Endothelial cell of umbilical vein (primary cell): ENCODE measurements at regions of chr1 and their contacts with region 1.

Region 1: GRCh38 chr1:159469921-159470533 is 30.5 kb downstream of the OR10J1 start:
- DNase-seq: peak; percentile 79
- H3K4me3 ChIP-seq: no peak overlapping the region
- H3K27ac ChIP-seq: peak overlapping the region; percentile 78
- H3K4me1 ChIP-seq: peaks cover 50% of the 10 kb centered on the region
- H3K27me3 ChIP-seq: no peaks in the 10 kb centered on the region
- CTCF ChIP-seq: no peak
- POLR2A ChIP-seq: peak; percentile 25

Region 2: GRCh38 chr1:159408862-159409400 is 61.1 kb before region 1 on chr1:
- CTCF ChIA-PET with region 1: no interaction called
- POLR2A ChIA-PET with region 1: no interaction called
- dilution Hi-C with region 1: no loop called
- intact Hi-C with region 1: loop called (anchors 2 kb)
- DNase-seq: peak; percentile 98
- H3K4me3 ChIP-seq: peak overlapping the region in 1 of 3 experiments; percentile 39
- H3K27ac ChIP-seq: peak overlapping the region; percentile 90
- H3K4me1 ChIP-seq: peaks cover 10% of the 10 kb centered on the region
- H3K27me3 ChIP-seq: no peaks in the 10 kb centered on the region
- CTCF ChIP-seq: no peak
- POLR2A ChIP-seq: no peak

Region 3: DNA sequence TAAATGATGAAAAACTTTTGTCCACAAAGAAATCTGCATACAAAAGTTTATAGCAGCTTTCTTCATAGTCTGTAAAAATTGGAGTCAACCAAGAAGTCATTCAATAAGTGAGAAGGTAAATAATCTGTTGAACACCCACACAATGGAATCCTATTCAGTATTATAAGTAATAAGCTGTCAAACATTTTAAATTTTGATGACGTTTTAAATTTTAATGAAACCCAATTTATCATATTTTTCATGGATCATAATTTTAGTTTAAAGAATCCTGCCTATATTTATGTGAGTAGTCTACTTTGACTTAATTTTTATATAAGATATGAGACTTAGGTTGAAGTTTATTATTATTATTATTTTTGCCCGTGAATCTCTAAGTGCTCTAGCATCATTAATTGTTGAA is 10.5 kb before region 1 on chr1:
- CTCF ChIA-PET with region 1: no interaction called
- POLR2A ChIA-PET with region 1: no interaction called
- dilution Hi-C with region 1: no loop called
- intact Hi-C with region 1: no loop called
- DNase-seq: no peak
- H3K4me3 ChIP-seq: no peak overlapping the region
- H3K27ac ChIP-seq: no peak overlapping the region
- H3K4me1 ChIP-seq: no peaks in the 10 kb centered on the region
- H3K27me3 ChIP-seq: no peaks in the 10 kb centered on the region
- CTCF ChIP-seq: no peak
- POLR2A ChIP-seq: no peak

Region 4: GRCh38 chr1:159492575-159493323 is 22.7 kb after region 1 on chr1:
- CTCF ChIA-PET with region 1: interaction called, 4 read pairs
- POLR2A ChIA-PET with region 1: no interaction called
- dilution Hi-C with region 1: no loop called
- intact Hi-C with region 1: loop called (anchors 1 kb)
- DNase-seq: peak; percentile 65
- H3K4me3 ChIP-seq: no peak overlapping the region
- H3K27ac ChIP-seq: peak overlapping the region; percentile 84
- H3K4me1 ChIP-seq: peaks cover 13% of the 10 kb centered on the region
- H3K27me3 ChIP-seq: no peaks in the 10 kb centered on the region
- CTCF ChIP-seq: no peak
- POLR2A ChIP-seq: peak; percentile 31

Region 5: GRCh38 chr1:159653201-159653600 is 183.2 kb after region 1 on chr1:
- CTCF ChIA-PET with region 1: no interaction called
- POLR2A ChIA-PET with region 1: no interaction called
- dilution Hi-C with region 1: no loop called
- intact Hi-C with region 1: loop called (anchors 1 kb)
- DNase-seq: peak; percentile 88
- H3K4me3 ChIP-seq: no peak overlapping the region
- H3K27ac ChIP-seq: peak overlapping the region; percentile 93
- H3K4me1 ChIP-seq: peaks cover 29% of the 10 kb centered on the region
- H3K27me3 ChIP-seq: no peaks in the 10 kb centered on the region
- CTCF ChIP-seq: no peak
- POLR2A ChIP-seq: no peak

Region 6: DNA sequence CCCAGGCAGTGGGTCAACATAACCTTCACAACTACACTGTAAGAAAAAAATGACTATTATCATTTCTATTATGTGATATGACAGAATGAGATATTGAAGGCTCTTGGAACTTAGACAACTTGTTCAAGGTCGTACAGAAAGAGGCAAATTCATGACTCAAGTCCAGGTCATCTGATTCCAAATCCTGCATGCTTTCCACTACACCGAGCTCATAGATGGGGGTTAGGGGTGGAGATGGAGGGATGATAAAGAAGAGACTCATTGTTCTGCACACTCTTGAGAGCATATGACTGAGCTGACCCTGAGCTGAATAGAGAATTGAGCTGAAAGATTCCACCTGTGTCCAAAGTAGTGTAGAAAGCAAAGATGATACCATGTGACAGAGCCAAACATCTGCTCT is 334.9 kb after region 1 on chr1:
- CTCF ChIA-PET with region 1: no interaction called
- POLR2A ChIA-PET with region 1: no interaction called
- dilution Hi-C with region 1: no loop called
- intact Hi-C with region 1: no loop called
- DNase-seq: no peak
- H3K4me3 ChIP-seq: no peak overlapping the region
- H3K27ac ChIP-seq: no peak overlapping the region
- H3K4me1 ChIP-seq: no peaks in the 10 kb centered on the region
- H3K27me3 ChIP-seq: peaks cover 0 to 2% of the 10 kb centered on the region in 2 experiments
- CTCF ChIP-seq: no peak
- POLR2A ChIP-seq: no peak

Region 7: GRCh38 chr1:159924981-159925712 is 455.1 kb after region 1 on chr1 and contains the start of gene TAGLN2:
- CTCF ChIA-PET with region 1: no interaction called
- POLR2A ChIA-PET with region 1: no interaction called
- dilution Hi-C with region 1: no loop called
- intact Hi-C with region 1: loop called (anchors 5 kb)
- DNase-seq: peak; percentile 93
- H3K4me3 ChIP-seq: peak within 1 kb of the TSS; percentile 46 to 78 (median 71)
- H3K27ac ChIP-seq: peak within 1 kb of the TSS; percentile 98
- H3K4me1 ChIP-seq: peaks cover 27% of the 10 kb centered on the region
- H3K27me3 ChIP-seq: no peaks in the 10 kb centered on the region
- CTCF ChIP-seq: no peak
- POLR2A ChIP-seq: peak; percentile 98
- total RNA-seq, gene TAGLN2: 646 and 750 TPM in 2 replicates